CD8-positive, alpha-beta T cell (primary cell): ENCODE measurements at regions of chr16 and their contacts with region 1.

Region 1: GRCh38 chr16:72008424-72009216 is at the start of gene DHODH:
- DNase-seq: peak; percentile 94 to 99 (median 97)
- ATAC-seq: peak; percentile 98
- H3K4me3 ChIP-seq: peak within 1 kb of the TSS; percentile 87 to 90
- H3K4me3 Mint-ChIP-seq: peak within 1 kb of the TSS; percentile 91
- H3K27ac ChIP-seq: peak within 1 kb of the TSS; percentile 41 to 66
- H3K27ac Mint-ChIP-seq: peak within 1 kb of the TSS; percentile 76
- H3K4me1 ChIP-seq: no peaks in the 10 kb centered on the region
- H3K4me1 Mint-ChIP-seq: peaks cover 20% of the 10 kb centered on the region
- H3K27me3 ChIP-seq: no peaks in the 10 kb centered on the region
- H3K27me3 Mint-ChIP-seq: no peaks in the 10 kb centered on the region
- CTCF ChIP-seq: no peak
- total RNA-seq, gene DHODH: 2.4 to 3.0 TPM

Region 2: DNA sequence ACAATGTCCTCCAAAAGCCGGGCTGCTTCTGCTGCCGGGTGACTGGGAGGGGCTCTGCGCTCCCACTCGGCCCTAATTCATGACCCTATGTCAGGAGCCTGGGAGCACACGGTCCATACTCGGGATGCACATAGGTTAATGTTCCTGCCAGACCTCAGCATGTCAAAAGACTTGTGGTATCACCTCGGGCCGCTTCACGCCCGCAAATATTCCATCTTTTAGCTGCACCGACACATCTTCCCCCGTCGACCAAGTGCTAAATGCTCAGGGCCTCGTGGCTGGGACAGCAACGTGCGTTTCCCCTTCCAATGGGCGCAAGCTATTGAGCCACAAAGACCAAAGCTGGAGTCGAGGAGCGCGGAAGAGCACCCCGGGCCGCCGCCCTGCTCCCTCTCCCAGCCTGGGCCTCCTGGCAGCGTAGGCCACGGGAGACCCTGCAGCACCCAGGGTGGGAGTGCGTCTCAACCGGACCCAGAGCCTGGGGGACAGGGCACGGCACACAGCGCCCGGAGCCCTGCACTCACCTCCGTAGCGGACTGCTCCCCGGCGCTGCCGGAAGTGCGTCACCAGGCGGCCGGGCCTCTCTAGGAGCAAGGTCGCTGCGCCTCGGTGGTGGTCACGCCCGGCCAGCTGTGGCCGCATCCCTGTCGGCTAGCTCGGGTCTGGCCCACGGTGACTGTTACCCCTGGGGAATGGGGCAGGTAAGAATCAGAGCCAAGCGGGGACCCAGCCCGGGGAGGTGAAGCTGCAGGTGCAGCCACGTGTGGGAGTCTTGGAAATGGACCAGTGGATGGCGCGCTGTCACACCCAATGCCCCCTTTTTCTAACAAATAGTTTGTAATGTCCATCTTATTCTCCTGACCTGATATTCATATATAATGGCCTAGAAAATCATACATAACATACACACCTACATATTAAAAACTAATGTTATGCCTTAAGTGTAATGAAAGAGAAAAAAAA is 546.7 kb before region 1 on chr16 and contains the start of gene ZNF23:
- CTCF ChIA-PET with region 1: no interaction called
- POLR2A ChIA-PET with region 1: no interaction called
- intact Hi-C with region 1: loop called in 1 of 2 experiments (anchors 2 kb)
- DNase-seq: peak; percentile 55 to 88 (median 79)
- ATAC-seq: peak; percentile 95
- H3K4me3 ChIP-seq: peak within 1 kb of the TSS; percentile 96 to 100
- H3K4me3 Mint-ChIP-seq: peak within 1 kb of the TSS; percentile 96
- H3K27ac ChIP-seq: peak within 1 kb of the TSS; percentile 92 to 93
- H3K27ac Mint-ChIP-seq: peak within 1 kb of the TSS; percentile 96
- H3K4me1 ChIP-seq: peaks cover 19% of the 10 kb centered on the region
- H3K4me1 Mint-ChIP-seq: peaks cover 32% of the 10 kb centered on the region
- H3K27me3 ChIP-seq: no peaks in the 10 kb centered on the region
- H3K27me3 Mint-ChIP-seq: no peaks in the 10 kb centered on the region
- CTCF ChIP-seq: peak; percentile 29
- total RNA-seq, gene ZNF23: 8.0 to 8.5 TPM

Region 3: DNA sequence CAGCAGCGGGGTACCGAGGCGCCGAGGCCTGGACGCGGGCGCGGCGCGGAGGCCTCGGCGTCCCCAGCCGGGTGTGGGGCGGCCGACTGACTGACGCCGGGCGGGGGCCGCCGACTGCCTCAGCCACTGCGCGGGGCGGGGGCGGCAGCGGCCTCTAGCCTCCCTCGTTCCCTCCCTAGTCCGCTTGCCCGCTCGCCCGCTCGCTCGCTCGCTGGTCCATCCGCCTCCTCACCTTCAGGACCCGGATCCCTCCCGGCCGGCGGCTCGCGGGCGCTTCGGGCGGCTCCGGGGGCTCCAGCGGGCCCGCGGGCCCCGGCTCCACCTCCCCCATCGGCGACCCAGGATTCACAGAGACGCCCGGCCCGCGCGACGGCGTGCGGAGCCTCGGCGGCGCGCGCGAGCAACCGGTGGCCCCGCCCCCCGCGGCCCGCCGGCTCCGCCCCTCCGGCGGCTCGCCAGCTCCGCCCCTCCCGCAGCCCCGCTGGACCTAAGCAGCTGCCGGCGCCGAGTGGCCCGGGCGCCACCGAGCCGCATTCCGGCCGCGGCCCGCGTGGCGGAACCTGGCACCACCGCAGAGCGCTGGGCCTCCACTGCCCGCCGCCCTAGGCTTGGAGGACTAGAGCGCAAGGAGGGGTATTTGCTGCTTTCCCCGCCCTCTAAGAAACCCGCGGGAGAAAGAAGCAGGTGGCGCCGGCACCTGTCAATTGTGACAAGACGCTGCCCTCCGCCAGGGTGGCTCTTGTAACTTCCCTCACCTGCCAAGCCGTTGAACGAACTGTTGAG is 284.9 kb before region 1 on chr16:
- CTCF ChIA-PET with region 1: no interaction called
- POLR2A ChIA-PET with region 1: no interaction called
- intact Hi-C with region 1: loop called (anchors 1 to 2 kb)
- DNase-seq: peak; percentile 61 to 90 (median 79)
- ATAC-seq: peak; percentile 82
- H3K4me3 ChIP-seq: peak overlapping the region; percentile 48 to 73
- H3K4me3 Mint-ChIP-seq: peak overlapping the region; percentile 79
- H3K27ac ChIP-seq: peak overlapping the region in 1 of 2 experiments; percentile 69
- H3K27ac Mint-ChIP-seq: peak overlapping the region; percentile 67
- H3K4me1 ChIP-seq: peaks cover 14% of the 10 kb centered on the region
- H3K4me1 Mint-ChIP-seq: peaks cover 15% of the 10 kb centered on the region
- H3K27me3 ChIP-seq: no peaks in the 10 kb centered on the region
- H3K27me3 Mint-ChIP-seq: no peaks in the 10 kb centered on the region
- CTCF ChIP-seq: no peak

Region 4: DNA sequence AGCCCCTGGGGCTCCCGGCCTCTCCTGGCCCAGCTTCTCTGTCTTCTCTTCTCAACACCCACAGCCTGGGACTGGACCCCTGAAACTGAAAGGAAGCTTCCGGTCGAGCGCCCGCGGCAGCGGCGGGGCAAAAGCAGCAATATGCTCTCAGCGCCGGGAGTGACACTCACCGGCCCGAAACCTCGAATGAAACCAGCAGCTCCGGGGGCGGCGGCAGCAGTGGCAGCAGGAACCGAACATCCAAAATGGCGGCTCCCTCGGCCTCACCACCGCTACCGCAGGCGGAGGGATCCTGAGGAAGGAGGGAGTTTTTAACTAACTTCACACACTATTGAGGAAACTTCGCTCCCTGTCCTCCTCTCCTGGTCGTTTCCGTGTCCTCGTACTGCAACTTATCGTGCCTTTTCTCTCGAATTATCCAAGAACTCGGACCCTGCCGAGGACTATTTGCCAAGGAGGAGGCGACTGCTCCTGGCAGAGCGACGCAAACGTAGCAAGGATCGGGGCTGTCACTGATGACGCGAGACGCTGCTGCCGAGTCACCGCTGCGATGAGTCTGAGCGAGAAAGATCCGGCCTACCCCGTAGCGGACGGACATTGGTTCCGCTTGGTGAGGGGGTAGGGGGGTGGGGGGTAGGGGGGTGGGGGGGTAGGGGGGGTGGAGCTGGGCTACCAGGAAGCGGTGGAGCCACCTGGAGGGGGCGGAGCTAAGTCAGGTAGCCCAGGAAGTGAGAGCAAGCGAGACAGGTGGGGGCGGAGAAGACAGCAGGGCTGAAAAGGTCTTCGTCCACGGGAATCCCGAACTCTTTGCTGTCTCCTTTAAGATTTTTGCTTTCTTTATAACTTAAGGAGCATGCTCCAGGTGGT is 199.8 kb before region 1 on chr16 and contains the start of gene AP1G1:
- CTCF ChIA-PET with region 1: no interaction called
- POLR2A ChIA-PET with region 1: no interaction called
- intact Hi-C with region 1: loop called (anchors 1 to 2 kb)
- DNase-seq: peak; percentile 87 to 99 (median 93)
- ATAC-seq: peak; percentile 89
- H3K4me3 ChIP-seq: peak within 1 kb of the TSS; percentile 95
- H3K4me3 Mint-ChIP-seq: peak within 1 kb of the TSS; percentile 95
- H3K27ac ChIP-seq: peak within 1 kb of the TSS; percentile 98
- H3K27ac Mint-ChIP-seq: peak within 1 kb of the TSS; percentile 99
- H3K4me1 ChIP-seq: peaks cover 26% of the 10 kb centered on the region
- H3K4me1 Mint-ChIP-seq: peaks cover 40% of the 10 kb centered on the region
- H3K27me3 ChIP-seq: no peaks in the 10 kb centered on the region
- H3K27me3 Mint-ChIP-seq: no peaks in the 10 kb centered on the region
- CTCF ChIP-seq: no peak
- total RNA-seq, gene AP1G1: 179 to 202 TPM

Region 5: DNA sequence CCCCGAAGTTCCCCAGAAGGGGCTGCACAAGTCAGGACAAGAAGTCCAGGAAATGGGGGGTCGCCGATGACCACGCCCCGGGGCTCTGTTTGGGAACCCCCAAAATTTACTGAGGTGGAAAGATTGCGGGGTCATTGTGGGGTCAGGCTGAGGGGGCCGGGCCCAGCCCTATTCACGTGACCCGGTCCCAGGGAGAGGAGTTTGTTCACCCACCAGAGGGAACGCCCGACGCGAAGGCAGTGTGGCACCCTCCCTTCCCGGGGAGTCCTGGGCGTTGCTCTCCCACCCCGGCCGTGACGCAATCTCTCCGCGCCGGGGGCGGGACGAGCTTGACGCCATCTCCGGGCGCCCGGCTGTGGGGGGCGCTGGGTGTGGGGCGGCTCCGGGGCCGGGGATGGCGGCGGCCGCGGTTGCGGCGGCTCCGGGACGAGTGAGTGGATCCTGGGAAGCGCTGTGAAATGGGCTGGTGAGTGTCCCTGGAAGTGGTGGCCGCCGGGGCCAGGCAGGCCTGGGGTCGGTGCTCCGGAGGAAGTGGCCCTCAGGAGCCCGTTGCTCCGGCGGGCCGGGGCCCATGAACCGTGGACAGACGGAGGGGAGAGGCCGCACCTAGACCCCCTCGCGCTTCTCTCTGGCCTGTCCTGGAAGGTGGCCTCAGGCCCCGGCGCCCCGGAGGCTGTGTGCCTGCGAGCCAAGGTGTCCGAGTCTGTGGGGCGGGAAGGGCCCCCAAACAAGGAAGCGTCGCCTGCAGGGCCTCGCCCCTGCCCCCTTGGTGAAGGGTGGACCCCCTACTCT is 162.8 kb before region 1 on chr16 and contains the start of gene ATXN1L:
- CTCF ChIA-PET with region 1: no interaction called
- POLR2A ChIA-PET with region 1: no interaction called
- intact Hi-C with region 1: loop called in 1 of 2 experiments (anchors 2 kb)
- DNase-seq: peak; percentile 88 to 98 (median 93)
- ATAC-seq: peak; percentile 94
- H3K4me3 ChIP-seq: peak within 1 kb of the TSS; percentile 87 to 97
- H3K4me3 Mint-ChIP-seq: peak within 1 kb of the TSS; percentile 90
- H3K27ac ChIP-seq: peak within 1 kb of the TSS; percentile 88 to 93
- H3K27ac Mint-ChIP-seq: peak within 1 kb of the TSS; percentile 94
- H3K4me1 ChIP-seq: peaks cover 16% of the 10 kb centered on the region
- H3K4me1 Mint-ChIP-seq: peaks cover 39% of the 10 kb centered on the region
- H3K27me3 ChIP-seq: no peaks in the 10 kb centered on the region
- H3K27me3 Mint-ChIP-seq: no peaks in the 10 kb centered on the region
- CTCF ChIP-seq: peak; percentile 12
- total RNA-seq, gene ATXN1L: 64.9 to 67.4 TPM

Region 6: GRCh38 chr16:71894921-71895678 is 113.5 kb before region 1 on chr16 and contains the start of gene IST1:
- CTCF ChIA-PET with region 1: no interaction called
- POLR2A ChIA-PET with region 1: no interaction called
- intact Hi-C with region 1: loop called (anchors 1 to 5 kb)
- DNase-seq: peak; percentile 95 to 99 (median 98)
- ATAC-seq: peak; percentile 94
- H3K4me3 ChIP-seq: peak within 1 kb of the TSS; percentile 98 to 99
- H3K4me3 Mint-ChIP-seq: peak within 1 kb of the TSS; percentile 97
- H3K27ac ChIP-seq: peak within 1 kb of the TSS; percentile 97
- H3K27ac Mint-ChIP-seq: peak within 1 kb of the TSS; percentile 97
- H3K4me1 ChIP-seq: peaks cover 34% of the 10 kb centered on the region
- H3K4me1 Mint-ChIP-seq: peaks cover 32% of the 10 kb centered on the region
- H3K27me3 ChIP-seq: no peaks in the 10 kb centered on the region
- H3K27me3 Mint-ChIP-seq: no peaks in the 10 kb centered on the region
- CTCF ChIP-seq: no peak
- total RNA-seq, gene IST1: 460 to 476 TPM

Region 7: DNA sequence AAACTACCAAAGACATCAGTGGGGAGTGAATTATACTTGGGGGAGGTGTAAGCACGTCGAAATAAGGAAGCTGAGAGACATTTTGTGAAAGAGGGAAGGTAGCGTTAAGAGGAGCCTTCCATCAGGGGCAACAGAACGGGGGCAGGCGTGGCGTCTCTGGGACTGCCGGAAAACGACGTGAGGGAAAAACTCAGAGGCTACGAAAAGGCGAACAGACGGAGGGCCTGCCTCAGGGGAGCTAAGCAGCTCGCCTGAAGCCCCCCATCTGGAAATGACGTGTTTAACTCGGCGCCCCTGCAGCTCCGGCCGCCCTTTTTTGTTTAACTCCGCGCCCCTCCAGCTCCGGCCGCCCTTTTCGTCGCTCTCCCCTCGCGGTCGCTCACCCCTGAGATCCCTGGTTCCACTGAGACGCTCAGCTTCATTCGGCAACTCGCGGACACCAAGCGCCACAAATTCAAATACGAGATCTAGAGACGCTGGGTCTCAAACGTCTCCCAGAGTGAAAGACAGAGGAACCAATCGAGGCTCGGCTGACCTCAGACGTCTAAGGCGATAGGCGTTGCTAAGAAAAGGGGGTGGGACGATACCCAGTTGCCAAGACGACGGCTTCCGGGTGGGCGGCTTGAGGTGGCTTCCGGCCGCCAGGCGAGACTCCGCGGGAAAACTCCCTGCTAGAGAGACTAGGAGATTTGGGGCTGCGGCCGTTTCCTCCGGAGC is 656.0 kb after region 1 on chr16:
- CTCF ChIA-PET with region 1: no interaction called
- POLR2A ChIA-PET with region 1: no interaction called
- intact Hi-C with region 1: loop called in 1 of 2 experiments (anchors 10 kb)
- DNase-seq: peak; percentile 87 to 98 (median 93)
- ATAC-seq: peak; percentile 98
- H3K4me3 ChIP-seq: peak overlapping the region; percentile 81 to 93
- H3K4me3 Mint-ChIP-seq: peak overlapping the region; percentile 100
- H3K27ac ChIP-seq: peak overlapping the region; percentile 59 to 77
- H3K27ac Mint-ChIP-seq: peak overlapping the region; percentile 98
- H3K4me1 ChIP-seq: peaks cover 14% of the 10 kb centered on the region
- H3K4me1 Mint-ChIP-seq: peaks cover 24% of the 10 kb centered on the region
- H3K27me3 ChIP-seq: no peaks in the 10 kb centered on the region
- H3K27me3 Mint-ChIP-seq: no peaks in the 10 kb centered on the region
- CTCF ChIP-seq: no peak